ENCODE measurements at regions of chr1 and their contacts with region 1.

Region 1: GRCh38 chr1:202462342-202463076 is 114.0 kb downstream of the PPP1R12B start:
- DNase-seq: no peak
- H3K4me3 ChIP-seq: no peak overlapping the region
- CTCF ChIP-seq: no peak

Region 2: GRCh38 chr1:202599677-202600431 is 137.3 kb after region 1 on chr1:
- CTCF ChIA-PET with region 1: interaction called, 48 read pairs
- POLR2A ChIA-PET with region 1: no interaction called
- DNase-seq: no peak
- H3K4me3 ChIP-seq: no peak overlapping the region
- CTCF ChIP-seq: peak; percentile 95

Region 3: GRCh38 chr1:202615501-202616354 is 153.2 kb after region 1 on chr1:
- CTCF ChIA-PET with region 1: interaction called, 25 read pairs
- POLR2A ChIA-PET with region 1: no interaction called
- DNase-seq: no peak
- H3K4me3 ChIP-seq: no peak overlapping the region
- CTCF ChIP-seq: no peak

Region 4: GRCh38 chr1:202661123-202661845 is 198.8 kb after region 1 on chr1:
- CTCF ChIA-PET with region 1: interaction called, 11 read pairs
- POLR2A ChIA-PET with region 1: no interaction called
- DNase-seq: no peak
- H3K4me3 ChIP-seq: no peak overlapping the region
- CTCF ChIP-seq: peak; percentile 10

Region 5: DNA sequence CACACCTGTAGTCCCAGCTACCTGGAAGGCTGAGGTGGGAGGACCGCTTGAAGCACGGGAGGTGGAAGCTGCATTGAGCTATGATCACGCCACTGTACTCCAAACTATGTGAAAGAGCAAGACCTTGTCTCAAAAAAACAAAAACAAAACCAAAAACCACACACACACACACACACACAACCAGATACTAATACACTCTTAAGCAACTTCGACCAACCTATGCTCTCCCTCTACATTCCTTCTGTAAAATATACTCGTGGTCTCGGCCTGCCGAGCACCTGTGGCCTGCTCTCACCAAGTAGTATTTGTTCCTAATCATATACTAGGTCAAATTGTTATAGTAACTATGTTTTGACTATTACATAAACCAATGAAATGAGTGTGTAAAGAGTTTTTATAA is 261.2 kb after region 1 on chr1:
- CTCF ChIA-PET with region 1: interaction called, 105 read pairs
- POLR2A ChIA-PET with region 1: no interaction called
- DNase-seq: no peak
- H3K4me3 ChIP-seq: no peak overlapping the region
- CTCF ChIP-seq: no peak